IMR-90 (cell line): ENCODE measurements at regions of chr1 and their contacts with region 1.

Region 1: GRCh38 chr1:63821091-63822005 is 47.5 kb downstream of the ROR1 start:
- DNase-seq: peak; percentile 73
- ATAC-seq: peak; percentile 48; the same call in 1 of the 2 replicates
- H3K4me3 ChIP-seq: no peak overlapping the region
- H3K27ac ChIP-seq: no peak overlapping the region
- H3K4me1 ChIP-seq: peaks cover 12% of the 10 kb centered on the region; the same call in 1 of the 2 replicates
- H3K27me3 ChIP-seq: no peaks in the 10 kb centered on the region; the same call in 1 of the 2 replicates
- CTCF ChIP-seq: no peak
- POLR2A ChIP-seq: no peak
- RAD21 ChIP-seq: no peak

Region 2: GRCh38 chr1:63585225-63585624 is 236.1 kb before region 1 on chr1:
- CTCF ChIA-PET with region 1: no interaction called
- POLR2A ChIA-PET with region 1: no interaction called
- dilution Hi-C with region 1: no loop called
- in situ Hi-C with region 1: no loop called
- intact Hi-C with region 1: no loop called
- DNase-seq: no peak
- ATAC-seq: no peak
- H3K4me3 ChIP-seq: no peak overlapping the region
- H3K27ac ChIP-seq: no peak overlapping the region
- H3K4me1 ChIP-seq: peaks cover 1% of the 10 kb centered on the region
- H3K27me3 ChIP-seq: no peaks in the 10 kb centered on the region
- CTCF ChIP-seq: no peak
- POLR2A ChIP-seq: no peak
- RAD21 ChIP-seq: no peak

Region 3: GRCh38 chr1:63794939-63795378 is 26.4 kb before region 1 on chr1:
- CTCF ChIA-PET with region 1: no interaction called
- POLR2A ChIA-PET with region 1: no interaction called
- dilution Hi-C with region 1: no loop called
- in situ Hi-C with region 1: no loop called
- intact Hi-C with region 1: no loop called
- DNase-seq: peak; percentile 28
- ATAC-seq: peak; percentile 60
- H3K4me3 ChIP-seq: no peak overlapping the region
- H3K27ac ChIP-seq: no peak overlapping the region
- H3K4me1 ChIP-seq: peaks cover 6% of the 10 kb centered on the region
- H3K27me3 ChIP-seq: no peaks in the 10 kb centered on the region
- CTCF ChIP-seq: no peak
- POLR2A ChIP-seq: no peak
- RAD21 ChIP-seq: no peak

Region 4: DNA sequence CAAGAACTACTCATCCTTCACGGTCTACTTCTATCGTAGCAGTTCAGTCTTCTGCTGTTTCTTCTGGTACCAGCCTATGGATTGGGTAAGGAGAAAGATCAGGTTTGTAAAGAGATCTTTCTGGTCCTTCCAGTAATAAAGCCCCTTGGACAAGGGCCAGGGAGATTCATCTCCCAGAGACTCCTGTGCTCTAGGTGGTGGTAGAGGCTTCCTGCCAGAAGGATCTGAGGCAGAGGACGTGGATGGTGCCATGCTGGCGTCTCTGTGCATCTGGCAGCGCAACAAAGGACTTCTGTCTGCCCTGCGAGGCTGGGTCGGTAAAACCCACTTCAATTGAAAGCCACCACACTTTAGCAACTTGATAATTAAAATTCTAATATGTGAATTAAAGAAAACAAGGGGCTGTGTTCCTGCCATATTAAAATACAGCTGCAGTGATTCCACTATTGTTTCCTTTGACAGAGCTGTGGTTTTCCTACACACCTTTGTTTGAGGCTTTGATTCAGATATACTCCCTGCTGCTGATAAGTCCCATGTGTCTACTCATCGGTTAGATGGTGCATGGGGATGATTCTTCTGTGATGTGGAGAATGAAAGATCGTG is 26.1 kb after region 1 on chr1:
- CTCF ChIA-PET with region 1: no interaction called
- POLR2A ChIA-PET with region 1: no interaction called
- dilution Hi-C with region 1: no loop called
- in situ Hi-C with region 1: no loop called
- intact Hi-C with region 1: no loop called
- DNase-seq: no peak
- ATAC-seq: no peak
- H3K4me3 ChIP-seq: no peak overlapping the region
- H3K27ac ChIP-seq: no peak overlapping the region
- H3K4me1 ChIP-seq: peaks cover 1% of the 10 kb centered on the region; the same call in 1 of the 2 replicates
- H3K27me3 ChIP-seq: no peaks in the 10 kb centered on the region; the same call in 1 of the 2 replicates
- CTCF ChIP-seq: no peak
- POLR2A ChIP-seq: no peak
- RAD21 ChIP-seq: no peak

Region 5: GRCh38 chr1:63888984-63889383 is 67.6 kb after region 1 on chr1:
- CTCF ChIA-PET with region 1: no interaction called
- POLR2A ChIA-PET with region 1: no interaction called
- dilution Hi-C with region 1: no loop called
- in situ Hi-C with region 1: loop called (anchors 10 kb)
- intact Hi-C with region 1: no loop called
- DNase-seq: peak; percentile 96
- ATAC-seq: peak; percentile 71
- H3K4me3 ChIP-seq: no peak overlapping the region
- H3K27ac ChIP-seq: no peak overlapping the region
- H3K4me1 ChIP-seq: peaks cover 10% of the 10 kb centered on the region
- H3K27me3 ChIP-seq: no peaks in the 10 kb centered on the region
- CTCF ChIP-seq: no peak
- POLR2A ChIP-seq: no peak
- RAD21 ChIP-seq: no peak